Heart right ventricle (tissue), 16 donors: ENCODE measurements at regions of chr4 and their contacts with region 1.

Region 1: DNA sequence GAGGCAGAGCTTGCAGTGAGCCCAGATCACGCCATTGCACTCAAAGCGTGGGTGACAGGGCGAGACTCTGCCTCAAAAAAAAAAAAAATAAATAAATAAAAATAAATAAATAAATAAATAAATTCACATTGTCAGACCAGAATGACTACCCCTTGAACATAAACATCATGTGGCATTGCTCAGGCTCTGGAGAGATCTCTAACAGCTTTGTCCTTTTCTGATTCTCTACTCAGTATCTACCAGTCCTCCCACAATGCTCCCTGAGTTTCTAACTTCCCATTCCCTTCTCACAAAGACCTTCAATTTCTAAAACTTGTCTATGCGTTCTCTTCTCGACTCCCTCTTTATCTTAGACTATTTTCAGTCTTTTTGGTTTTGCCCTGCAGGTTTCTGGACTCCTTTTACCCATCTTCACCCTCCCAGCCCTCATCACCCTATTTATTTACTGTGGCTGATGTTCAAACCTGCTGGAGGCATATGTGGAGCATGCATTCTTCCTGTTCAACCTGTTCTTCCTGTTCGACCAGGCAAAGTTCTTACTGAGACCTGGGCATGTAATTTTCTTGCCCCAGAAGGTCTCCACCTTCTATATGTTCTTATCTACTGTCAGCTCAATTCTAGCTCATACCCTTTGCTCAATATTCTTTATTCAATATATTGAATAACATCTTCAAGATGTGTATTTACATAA is 69.2 kb upstream of the AGA start:
- DNase-seq: no peak
- ATAC-seq: no peak
- H3K4me3 ChIP-seq: no peak overlapping the region
- H3K27ac ChIP-seq: no peak overlapping the region
- H3K4me1 ChIP-seq: no peaks in the 10 kb centered on the region
- H3K27me3 ChIP-seq: no peaks in the 10 kb centered on the region
- CTCF ChIP-seq: no peak

Region 2: GRCh38 chr4:177427192-177427591 is 84.3 kb before region 1 on chr4:
- intact Hi-C with region 1: no loop called
- DNase-seq: no peak
- ATAC-seq: no peak
- H3K4me3 ChIP-seq: no peak overlapping the region
- H3K27ac ChIP-seq: no peak overlapping the region
- H3K4me1 ChIP-seq: no peaks in the 10 kb centered on the region
- H3K27me3 ChIP-seq: no peaks in the 10 kb centered on the region
- CTCF ChIP-seq: no peak

Region 3: GRCh38 chr4:177455561-177455970 is 55.9 kb before region 1 on chr4:
- intact Hi-C with region 1: no loop called
- DNase-seq: no peak
- ATAC-seq: no peak
- H3K4me3 ChIP-seq: no peak overlapping the region
- H3K27ac ChIP-seq: no peak overlapping the region
- H3K4me1 ChIP-seq: no peaks in the 10 kb centered on the region
- H3K27me3 ChIP-seq: no peaks in the 10 kb centered on the region
- CTCF ChIP-seq: no peak

Region 4: GRCh38 chr4:177699365-177700213 is 188.1 kb after region 1 on chr4:
- intact Hi-C with region 1: loop called in 1 of 10 experiments (anchors 5 kb)
- DNase-seq: no peak
- ATAC-seq: no peak
- H3K4me3 ChIP-seq: no peak overlapping the region
- H3K27ac ChIP-seq: no peak overlapping the region
- H3K4me1 ChIP-seq: no peaks in the 10 kb centered on the region
- H3K27me3 ChIP-seq: no peaks in the 10 kb centered on the region
- CTCF ChIP-seq: no peak

Region 5: GRCh38 chr4:178068136-178068535 is 556.7 kb after region 1 on chr4:
- intact Hi-C with region 1: no loop called
- DNase-seq: no peak
- ATAC-seq: no peak
- H3K4me3 ChIP-seq: no peak overlapping the region
- H3K27ac ChIP-seq: no peak overlapping the region
- H3K4me1 ChIP-seq: no peaks in the 10 kb centered on the region
- H3K27me3 ChIP-seq: no peaks in the 10 kb centered on the region
- CTCF ChIP-seq: no peak